ENCODE measurements at regions of chr12 and their contacts with region 1.

Region 1: GRCh38 chr12:130761537-130762318 is 45.6 kb upstream of the RIMBP2 start:
- DNase-seq: peak; percentile 53 to 84 (median 67)
- H3K4me3 ChIP-seq: no peak overlapping the region
- H3K27ac ChIP-seq: no peak overlapping the region
- H3K4me1 ChIP-seq: no peaks in the 10 kb centered on the region
- H3K27me3 ChIP-seq: peaks cover 9% of the 10 kb centered on the region
- CTCF ChIP-seq: peak; percentile 20 to 69 (median 59)
- POLR2A ChIP-seq: no peak

Region 2: GRCh38 chr12:130357241-130357640 is 404.5 kb before region 1 on chr12:
- intact Hi-C with region 1: no loop called
- DNase-seq: no peak
- H3K4me3 ChIP-seq: no peak overlapping the region
- H3K27ac ChIP-seq: no peak overlapping the region
- H3K4me1 ChIP-seq: no peaks in the 10 kb centered on the region
- H3K27me3 ChIP-seq: no peaks in the 10 kb centered on the region
- CTCF ChIP-seq: no peak
- POLR2A ChIP-seq: no peak

Region 3: DNA sequence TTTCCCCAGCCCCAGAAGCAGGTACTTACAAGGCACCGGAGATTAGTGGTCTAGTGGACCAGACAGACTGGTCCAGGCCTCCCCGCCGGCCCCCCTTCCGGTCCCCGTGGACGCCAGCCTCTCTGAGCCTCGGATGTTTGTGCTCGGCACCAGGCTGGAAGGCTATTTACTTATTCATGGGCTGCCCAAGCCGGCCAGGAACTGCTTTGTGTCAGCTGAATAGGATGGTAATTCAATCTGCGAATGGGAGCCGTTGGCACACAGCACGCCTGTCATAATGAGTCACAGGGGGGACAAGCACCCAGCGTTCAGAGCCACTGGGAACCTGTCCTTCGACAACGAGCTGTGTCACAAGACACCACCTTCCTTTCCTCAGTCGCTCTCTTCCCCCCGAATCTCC is 128.0 kb before region 1 on chr12:
- intact Hi-C with region 1: no loop called
- DNase-seq: peak in 6 of 7 donors; percentile 7 to 94 (median 36)
- H3K4me3 ChIP-seq: no peak overlapping the region
- H3K27ac ChIP-seq: peak overlapping the region in 1 of 5 donors; percentile 68
- H3K4me1 ChIP-seq: no peaks in the 10 kb centered on the region
- H3K27me3 ChIP-seq: no peaks in the 10 kb centered on the region
- CTCF ChIP-seq: no peak
- POLR2A ChIP-seq: peak; percentile 33 to 38

Region 4: DNA sequence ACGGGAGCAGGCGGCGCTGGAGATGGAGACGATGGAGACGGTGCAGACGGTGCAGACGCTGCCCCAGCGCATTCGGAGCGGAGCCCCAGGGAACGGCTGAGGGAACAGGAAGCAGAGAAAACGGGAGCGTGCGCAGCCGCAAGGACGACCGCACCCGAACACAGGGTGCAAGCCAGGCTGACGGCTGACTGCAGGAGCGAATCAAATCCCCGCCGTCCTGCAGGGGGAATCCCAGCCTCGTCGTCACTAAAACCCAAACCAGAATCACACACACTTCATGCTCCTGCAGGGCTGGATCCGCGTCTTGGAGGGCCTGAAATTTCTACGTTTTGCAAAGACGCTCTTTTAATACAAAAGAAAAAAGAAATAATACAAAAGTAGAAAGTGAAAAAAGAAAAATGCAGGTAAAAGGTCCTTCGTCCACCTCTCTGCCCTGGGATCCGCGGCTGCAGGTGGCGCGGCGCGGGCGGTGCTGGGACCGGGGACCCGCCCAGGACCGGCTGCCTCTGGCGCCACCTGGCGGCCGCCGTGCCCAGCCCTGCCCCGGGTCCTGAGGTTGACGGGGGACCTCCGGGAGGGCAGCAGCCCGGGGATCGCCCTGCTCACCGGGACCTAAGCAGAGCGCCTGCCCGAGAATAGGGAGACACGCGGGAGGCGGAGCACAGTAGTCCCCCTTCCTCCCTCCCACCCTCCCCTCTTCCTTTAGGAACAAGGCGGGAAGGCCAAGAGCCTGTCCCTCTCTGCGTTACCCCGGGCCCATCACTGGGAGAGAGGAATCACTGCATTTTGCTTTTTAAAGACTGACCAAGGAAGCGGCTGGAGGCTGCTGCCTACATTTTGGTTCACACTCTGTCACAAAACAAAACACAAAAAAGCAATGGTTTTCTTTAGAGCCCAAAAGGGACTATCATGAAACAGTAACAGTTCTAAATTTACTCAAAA is 57.2 kb after region 1 on chr12:
- intact Hi-C with region 1: loop called in 1 of 2 experiments (anchors 5 kb)
- DNase-seq: peak; percentile 28 to 71 (median 61)
- H3K4me3 ChIP-seq: peak overlapping the region in 1 of 4 donors; percentile 56
- H3K27ac ChIP-seq: peak overlapping the region in 1 of 5 donors; percentile 41
- H3K4me1 ChIP-seq: no peaks in the 10 kb centered on the region
- H3K27me3 ChIP-seq: no peaks in the 10 kb centered on the region
- CTCF ChIP-seq: peak; percentile 25 to 94 (median 52)
- POLR2A ChIP-seq: no peak

Measured in adrenal gland (tissue), 19 donors.